ENCODE measurements at regions of chr17 and their contacts with region 1.

Region 1: GRCh38 chr17:29389982-29390850 is at the start of gene TAOK1:
- DNase-seq: peak; percentile 99
- ATAC-seq: peak; percentile 95
- H3K4me3 Mint-ChIP-seq: peak within 1 kb of the TSS; percentile 81
- H3K27ac Mint-ChIP-seq: peak within 1 kb of the TSS; percentile 94
- H3K4me1 Mint-ChIP-seq: peaks cover 36% of the 10 kb centered on the region
- H3K27me3 Mint-ChIP-seq: no peaks in the 10 kb centered on the region
- total RNA-seq, gene TAOK1: 29.9 to 35.1 TPM

Region 2: GRCh38 chr17:29140051-29140621 is 250.1 kb before region 1 on chr17:
- CTCF ChIA-PET with region 1: no interaction called
- POLR2A ChIA-PET with region 1: no interaction called
- intact Hi-C with region 1: loop called in 1 of 2 experiments (anchors 2 kb)
- DNase-seq: peak; percentile 92
- ATAC-seq: peak; percentile 60
- H3K4me3 Mint-ChIP-seq: peak overlapping the region; percentile 89
- H3K27ac Mint-ChIP-seq: peak overlapping the region; percentile 97
- H3K4me1 Mint-ChIP-seq: peaks cover 74% of the 10 kb centered on the region
- H3K27me3 Mint-ChIP-seq: no peaks in the 10 kb centered on the region

Region 3: GRCh38 chr17:29357821-29358232 is 32.4 kb before region 1 on chr17:
- CTCF ChIA-PET with region 1: interaction called, 4 read pairs
- POLR2A ChIA-PET with region 1: no interaction called
- intact Hi-C with region 1: loop called in 1 of 2 experiments (anchors 1 kb)
- DNase-seq: no peak
- ATAC-seq: peak; percentile 84
- H3K4me3 Mint-ChIP-seq: no peak overlapping the region
- H3K27ac Mint-ChIP-seq: no peak overlapping the region
- H3K4me1 Mint-ChIP-seq: no peaks in the 10 kb centered on the region
- H3K27me3 Mint-ChIP-seq: no peaks in the 10 kb centered on the region

Region 4: DNA sequence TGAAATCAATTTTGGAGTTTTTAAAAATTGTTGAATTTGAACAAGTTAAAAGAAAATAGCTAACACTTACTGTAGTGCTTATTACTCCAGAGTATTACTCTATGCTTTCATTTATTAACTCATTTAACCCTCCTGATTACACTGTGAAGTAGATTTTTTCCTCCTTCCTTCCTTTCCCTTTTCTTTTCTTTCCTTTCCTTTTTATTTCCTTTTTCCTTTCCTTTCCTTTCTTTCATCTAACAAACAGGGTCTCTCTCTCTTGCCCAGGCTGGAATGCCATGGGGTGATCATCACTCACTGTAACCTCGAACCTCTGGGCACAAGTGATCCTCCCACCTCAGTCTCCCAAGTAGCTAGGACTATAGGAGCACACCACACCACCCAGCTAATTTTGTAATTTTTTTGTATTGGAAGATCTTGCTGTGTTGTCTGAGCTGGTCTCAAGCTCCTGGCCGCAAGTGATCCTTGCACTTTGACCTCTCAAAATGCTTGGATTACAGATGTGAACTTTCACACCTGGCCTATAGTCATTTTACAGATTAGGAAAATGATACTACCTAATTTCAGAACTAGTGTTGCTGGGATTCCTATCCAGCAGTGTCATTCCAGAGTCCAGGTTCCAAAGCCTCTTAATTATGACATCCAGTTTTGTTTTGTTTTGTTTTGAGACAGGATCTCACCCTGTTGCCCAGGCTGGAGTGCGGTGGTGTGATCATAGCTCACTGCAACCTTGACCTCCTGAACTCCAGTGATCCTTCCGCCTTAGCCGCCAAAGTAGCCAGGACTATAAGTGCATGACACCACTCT is 59.9 kb after region 1 on chr17:
- CTCF ChIA-PET with region 1: no interaction called
- POLR2A ChIA-PET with region 1: no interaction called
- intact Hi-C with region 1: loop called in 1 of 2 experiments (anchors 5 kb)
- DNase-seq: no peak
- ATAC-seq: no peak
- H3K4me3 Mint-ChIP-seq: no peak overlapping the region
- H3K27ac Mint-ChIP-seq: peak overlapping the region; percentile 28
- H3K4me1 Mint-ChIP-seq: peaks cover 41% of the 10 kb centered on the region
- H3K27me3 Mint-ChIP-seq: no peaks in the 10 kb centered on the region

Region 5: DNA sequence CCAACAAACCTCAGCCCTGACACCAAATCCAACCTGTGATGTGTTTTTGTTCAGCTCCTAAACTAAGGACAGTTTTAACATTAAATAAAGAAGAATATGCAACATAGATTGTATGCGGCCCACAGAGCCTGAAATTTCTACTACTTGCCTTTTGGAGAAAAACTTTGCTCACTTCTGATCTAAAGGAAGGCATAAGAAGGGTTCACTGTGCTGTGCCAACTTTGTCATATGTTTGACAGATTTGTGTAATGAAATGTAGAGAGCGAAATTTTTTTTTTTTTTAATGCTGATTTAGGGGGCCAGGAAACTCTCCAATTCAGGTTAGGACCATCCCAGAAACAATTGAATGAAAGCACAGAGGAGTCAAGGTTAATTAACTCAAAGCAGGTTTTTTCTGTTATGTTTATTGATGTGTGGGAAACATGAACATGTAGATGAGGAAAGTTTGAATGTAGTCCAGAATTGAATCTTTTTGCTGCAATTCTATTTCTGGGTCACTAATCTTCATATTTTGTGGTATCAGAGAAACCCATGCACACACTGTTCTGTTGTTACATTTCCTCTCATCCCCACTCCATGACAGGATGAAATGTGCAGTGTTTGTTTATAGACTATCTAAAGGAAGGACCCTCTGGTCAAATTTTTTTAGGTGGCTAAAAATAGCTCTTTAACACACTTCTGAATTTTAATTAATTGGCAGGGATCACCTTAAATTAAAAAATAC is 71.4 kb after region 1 on chr17:
- CTCF ChIA-PET with region 1: no interaction called
- POLR2A ChIA-PET with region 1: no interaction called
- intact Hi-C with region 1: no loop called
- DNase-seq: no peak
- ATAC-seq: no peak
- H3K4me3 Mint-ChIP-seq: no peak overlapping the region
- H3K27ac Mint-ChIP-seq: peak overlapping the region; percentile 0
- H3K4me1 Mint-ChIP-seq: peaks cover 7% of the 10 kb centered on the region
- H3K27me3 Mint-ChIP-seq: no peaks in the 10 kb centered on the region

Region 6: GRCh38 chr17:29589524-29590410 is 199.6 kb after region 1 on chr17 and contains the start of gene GIT1:
- CTCF ChIA-PET with region 1: no interaction called
- POLR2A ChIA-PET with region 1: no interaction called
- intact Hi-C with region 1: loop called in 1 of 2 experiments (anchors 2 kb)
- DNase-seq: peak; percentile 92
- ATAC-seq: peak; percentile 69
- H3K4me3 Mint-ChIP-seq: peak within 1 kb of the TSS; percentile 94
- H3K27ac Mint-ChIP-seq: peak within 1 kb of the TSS; percentile 92
- H3K4me1 Mint-ChIP-seq: peaks cover 64% of the 10 kb centered on the region
- H3K27me3 Mint-ChIP-seq: no peaks in the 10 kb centered on the region
- total RNA-seq, gene GIT1: 60.5 to 74.1 TPM